SK-N-SH (cell line): ENCODE measurements at regions of chr14 and their contacts with region 1.

Region 1: GRCh38 chr14:61837336-61838229 is 75.4 kb downstream of the SNAPC1 start:
- DNase-seq: peak; percentile 65
- H3K4me3 ChIP-seq: no peak overlapping the region; a peak in 1 of 4 replicates
- H3K27ac ChIP-seq: no peak overlapping the region
- H3K4me1 ChIP-seq: peaks cover 0 to 3% of the 10 kb centered on the region in 2 experiments; a peak in 3 of 4 replicates
- H3K27me3 ChIP-seq: no peaks in the 10 kb centered on the region
- CTCF ChIP-seq: peak; percentile 93
- EP300 ChIP-seq: no peak
- RAD21 ChIP-seq: peak; percentile 99

Region 2: DNA sequence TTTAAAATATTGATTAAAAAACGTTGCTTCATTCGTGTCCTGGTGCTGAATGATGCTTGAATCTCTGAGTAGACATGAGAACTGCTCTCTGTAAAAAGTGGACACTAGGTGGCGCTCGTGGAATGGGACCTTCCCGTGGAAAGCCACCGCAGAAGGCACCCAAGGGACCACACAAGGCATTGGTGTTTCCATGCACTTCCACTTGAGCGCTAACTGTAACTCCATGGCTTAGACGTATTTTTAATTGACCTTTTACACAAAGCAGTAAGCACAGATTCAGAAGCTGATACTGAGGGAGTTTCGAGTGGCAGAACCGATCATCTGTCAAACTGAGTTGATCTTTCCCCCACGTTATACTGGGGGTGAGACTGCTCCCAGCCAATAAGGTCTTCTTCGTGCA is 380.9 kb before region 1 on chr14:
- CTCF ChIA-PET with region 1: interaction called, 117 read pairs
- POLR2A ChIA-PET with region 1: no interaction called
- DNase-seq: peak; percentile 60
- H3K4me3 ChIP-seq: no peak overlapping the region
- H3K27ac ChIP-seq: no peak overlapping the region
- H3K4me1 ChIP-seq: peaks cover 0 to 9% of the 10 kb centered on the region in 2 experiments; a peak in 1 of 4 replicates
- H3K27me3 ChIP-seq: no peaks in the 10 kb centered on the region
- CTCF ChIP-seq: peak; percentile 93
- EP300 ChIP-seq: no peak
- RAD21 ChIP-seq: peak; percentile 85

Region 3: DNA sequence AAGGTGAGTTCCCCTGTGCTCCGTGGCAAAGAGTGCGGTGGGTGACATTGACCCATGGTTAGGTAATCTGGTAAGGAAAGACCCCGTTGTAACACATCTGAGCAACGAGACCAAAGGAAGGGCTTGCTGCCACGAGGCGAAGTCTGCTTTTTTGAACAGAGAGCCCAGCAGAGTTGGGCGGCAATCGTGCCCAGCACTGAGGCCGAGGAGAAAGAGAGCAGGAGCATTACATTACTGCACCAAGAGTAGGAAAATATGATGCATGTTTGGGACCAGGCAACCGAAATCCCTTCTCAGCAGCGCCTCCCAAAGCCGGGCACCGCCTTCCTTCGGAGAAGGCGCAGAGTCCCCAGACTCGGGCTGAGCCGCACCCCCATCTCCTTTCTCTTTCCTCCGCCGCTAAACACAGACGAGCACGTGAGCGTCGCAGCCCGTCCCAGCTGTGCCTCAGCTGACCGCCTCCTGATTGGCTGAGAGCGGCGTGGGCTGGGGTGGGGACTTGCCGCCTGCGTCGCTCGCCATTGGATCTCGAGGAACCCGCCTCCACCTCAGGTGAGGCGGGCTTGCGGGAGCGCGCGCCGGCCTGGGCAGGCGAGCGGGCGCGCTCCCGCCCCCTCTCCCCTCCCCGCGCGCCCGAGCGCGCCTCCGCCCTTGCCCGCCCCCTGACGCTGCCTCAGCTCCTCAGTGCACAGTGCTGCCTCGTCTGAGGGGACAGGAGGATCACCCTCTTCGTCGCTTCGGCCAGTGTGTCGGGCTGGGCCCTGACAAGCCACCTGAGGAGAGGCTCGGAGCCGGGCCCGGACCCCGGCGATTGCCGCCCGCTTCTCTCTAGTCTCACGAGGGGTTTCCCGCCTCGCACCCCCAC is 142.5 kb before region 1 on chr14 and contains the start of gene HIF1A:
- CTCF ChIA-PET with region 1: interaction called, 13 read pairs
- POLR2A ChIA-PET with region 1: no interaction called
- DNase-seq: peak; percentile 97
- H3K4me3 ChIP-seq: peak within 1 kb of the TSS; percentile 78 to 92
- H3K27ac ChIP-seq: peak within 1 kb of the TSS; percentile 92 to 98
- H3K4me1 ChIP-seq: peaks cover 6 to 8% of the 10 kb centered on the region in 2 experiments; a peak in 3 of 4 replicates
- H3K27me3 ChIP-seq: no peaks in the 10 kb centered on the region
- CTCF ChIP-seq: no peak
- EP300 ChIP-seq: peak; percentile 16 to 28; a peak in 2 of 4 replicates
- RAD21 ChIP-seq: no peak; the same call in 1 of the 2 replicates
- polyA plus RNA-seq, gene HIF1A: 18.9 and 20.8 TPM in 2 replicates

Region 4: GRCh38 chr14:61750708-61751474 is 86.7 kb before region 1 on chr14:
- CTCF ChIA-PET with region 1: interaction called, 20 read pairs
- POLR2A ChIA-PET with region 1: no interaction called
- DNase-seq: peak; percentile 52
- H3K4me3 ChIP-seq: peak overlapping the region in 1 of 2 experiments; percentile 19; a peak in 1 of 4 replicates
- H3K27ac ChIP-seq: no peak overlapping the region
- H3K4me1 ChIP-seq: peaks cover 0 to 11% of the 10 kb centered on the region in 2 experiments; a peak in 1 of 4 replicates
- H3K27me3 ChIP-seq: no peaks in the 10 kb centered on the region
- CTCF ChIP-seq: no peak
- EP300 ChIP-seq: no peak
- RAD21 ChIP-seq: no peak

Region 5: GRCh38 chr14:61761959-61762786 is 75.4 kb before region 1 on chr14 and contains the start of gene SNAPC1:
- CTCF ChIA-PET with region 1: interaction called, 18 read pairs
- POLR2A ChIA-PET with region 1: no interaction called
- DNase-seq: peak; percentile 97
- H3K4me3 ChIP-seq: peak within 1 kb of the TSS; percentile 81 to 84
- H3K27ac ChIP-seq: peak within 1 kb of the TSS; percentile 81 to 92
- H3K4me1 ChIP-seq: peaks cover 12 to 15% of the 10 kb centered on the region in 2 experiments; a peak in 3 of 4 replicates
- H3K27me3 ChIP-seq: no peaks in the 10 kb centered on the region
- CTCF ChIP-seq: no peak
- EP300 ChIP-seq: no peak
- RAD21 ChIP-seq: no peak
- polyA plus RNA-seq, gene SNAPC1: 3.4 and 4.6 TPM in 2 replicates

Region 6: GRCh38 chr14:61822458-61822857 is 15.1 kb before region 1 on chr14:
- CTCF ChIA-PET with region 1: interaction called, 36 read pairs
- POLR2A ChIA-PET with region 1: no interaction called
- DNase-seq: no peak
- H3K4me3 ChIP-seq: no peak overlapping the region
- H3K27ac ChIP-seq: no peak overlapping the region
- H3K4me1 ChIP-seq: no peaks in the 10 kb centered on the region; a peak in 1 of 4 replicates
- H3K27me3 ChIP-seq: no peaks in the 10 kb centered on the region
- CTCF ChIP-seq: no peak
- EP300 ChIP-seq: no peak
- RAD21 ChIP-seq: no peak

Region 7: DNA sequence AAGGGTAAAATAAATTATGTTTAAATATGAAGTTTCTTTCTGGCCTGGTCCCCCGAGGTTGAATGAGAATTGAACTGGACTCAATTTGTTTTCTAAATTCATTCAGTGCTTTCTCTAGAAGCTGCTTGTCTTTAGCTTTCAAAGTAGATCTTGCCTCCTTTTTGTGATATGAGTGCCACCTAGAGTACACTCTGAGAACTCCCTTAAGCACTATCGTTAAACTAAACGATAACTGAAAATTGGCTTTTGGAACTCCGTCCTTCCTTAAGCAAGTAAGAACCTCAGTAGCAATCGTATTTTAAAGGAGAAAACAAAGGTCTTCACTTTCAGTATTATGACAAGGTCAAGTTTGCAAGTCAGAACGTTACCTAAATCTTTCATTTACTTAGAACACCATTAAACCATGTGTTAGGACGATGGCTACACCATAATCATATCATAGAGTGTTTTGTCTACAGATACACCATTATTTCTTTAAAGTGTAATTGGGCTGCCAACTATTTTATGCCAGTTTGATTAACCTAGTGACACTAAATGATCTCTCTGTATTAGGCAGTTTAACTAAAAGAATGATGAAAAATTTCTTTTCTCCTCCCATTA is 289.4 kb after region 1 on chr14:
- CTCF ChIA-PET with region 1: interaction called, 37 read pairs
- POLR2A ChIA-PET with region 1: no interaction called
- DNase-seq: peak; percentile 28
- H3K4me3 ChIP-seq: no peak overlapping the region; a peak in 1 of 4 replicates
- H3K27ac ChIP-seq: no peak overlapping the region
- H3K4me1 ChIP-seq: no peaks in the 10 kb centered on the region
- H3K27me3 ChIP-seq: no peaks in the 10 kb centered on the region; the same call in 1 of the 2 replicates
- CTCF ChIP-seq: peak; percentile 85
- EP300 ChIP-seq: no peak
- RAD21 ChIP-seq: peak; percentile 90